ENCODE measurements at regions of chr3 and their contacts with region 1.

Region 1: DNA sequence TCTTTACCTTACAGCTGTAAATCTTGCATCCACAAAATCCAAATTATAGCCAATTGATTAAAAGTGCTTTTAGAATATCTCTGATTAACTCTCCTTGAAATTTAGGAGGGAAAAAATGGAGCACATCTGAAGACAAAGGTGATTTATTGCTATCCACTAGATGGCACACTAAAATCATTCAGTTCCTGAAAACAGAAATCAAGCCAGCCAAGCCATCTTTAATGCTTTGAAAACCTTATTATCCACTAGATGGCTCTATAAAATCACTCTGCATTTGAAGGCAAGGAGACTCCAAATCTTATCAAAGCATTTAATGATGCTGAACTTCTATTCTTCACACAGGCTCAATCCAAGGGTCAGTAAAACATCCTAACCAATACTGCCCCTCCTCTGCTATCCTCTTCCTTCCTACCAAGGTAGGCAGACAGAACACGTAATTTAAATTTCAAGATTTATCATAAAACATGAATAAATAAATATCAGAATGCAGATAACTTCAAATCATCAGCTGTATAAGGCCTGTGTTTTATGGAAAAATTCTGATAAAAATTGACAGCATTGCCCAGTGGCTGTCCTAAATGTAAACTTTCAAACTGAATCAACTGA is 48.4 kb downstream of the GOLIM4 start:
- DNase-seq: peak; percentile 52
- H3K4me3 ChIP-seq: no peak overlapping the region
- H3K27me3 ChIP-seq: no peaks in the 10 kb centered on the region
- CTCF ChIP-seq: peak; percentile 71

Region 2: DNA sequence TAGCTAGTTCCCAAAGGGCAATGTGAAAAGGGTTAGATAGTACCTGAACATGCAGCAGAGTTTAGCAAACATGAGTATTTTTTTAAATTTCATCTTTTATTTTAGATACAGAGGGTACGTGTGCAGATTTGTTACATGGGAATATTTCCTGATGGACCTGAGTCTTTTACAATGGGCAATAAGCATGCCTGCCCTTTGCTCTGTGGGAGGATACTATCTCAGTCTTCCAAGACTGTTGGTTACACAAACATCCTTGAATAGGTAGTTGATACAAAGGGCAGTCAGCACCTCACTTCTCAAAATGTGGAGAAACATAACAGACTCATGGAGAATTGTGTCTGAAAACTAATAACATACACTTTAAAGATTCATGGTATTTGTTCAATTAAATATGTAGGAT is 54.9 kb before region 1 on chr3:
- CTCF ChIA-PET with region 1: no interaction called
- POLR2A ChIA-PET with region 1: no interaction called
- DNase-seq: no peak
- H3K4me3 ChIP-seq: no peak overlapping the region
- H3K27me3 ChIP-seq: no peaks in the 10 kb centered on the region
- CTCF ChIP-seq: no peak

Region 3: DNA sequence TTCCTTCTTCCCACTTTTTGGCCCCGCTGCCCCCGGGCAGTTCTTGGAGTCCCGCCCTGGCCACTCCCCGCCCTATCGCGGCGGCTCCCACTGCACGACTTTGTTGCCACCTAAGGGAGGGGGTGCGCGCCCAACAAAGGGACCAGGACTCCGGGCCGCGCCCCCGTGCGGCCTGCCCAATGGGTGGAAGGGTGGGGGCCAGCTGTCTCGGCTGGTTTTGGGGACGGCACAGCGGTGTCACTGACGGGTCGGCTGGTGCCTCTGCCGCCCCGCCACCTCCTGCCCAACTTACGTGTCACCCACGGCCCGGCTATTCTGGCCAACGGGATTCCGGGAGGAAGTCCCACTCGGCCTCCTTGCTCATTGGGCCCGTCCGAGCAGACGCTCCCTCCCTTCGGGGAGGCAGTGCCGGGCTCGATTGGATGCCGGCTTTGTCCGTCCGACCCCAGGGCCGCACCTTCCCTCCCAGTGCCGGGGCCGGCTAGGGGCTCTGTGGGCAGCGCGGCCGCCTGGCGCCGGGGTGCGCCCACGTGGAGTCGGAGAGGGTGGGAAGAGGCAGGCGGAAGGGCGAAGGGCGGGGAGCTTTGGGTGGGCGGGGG is 48.4 kb after region 1 on chr3 and contains the start of gene GOLIM4:
- CTCF ChIA-PET with region 1: interaction called, 16 read pairs
- POLR2A ChIA-PET with region 1: no interaction called
- DNase-seq: peak; percentile 88
- H3K4me3 ChIP-seq: peak within 1 kb of the TSS; percentile 89
- H3K27me3 ChIP-seq: no peaks in the 10 kb centered on the region
- CTCF ChIP-seq: no peak
- polyA plus RNA-seq, gene GOLIM4: 32.4 and 35.1 TPM in 2 replicates

Region 4: GRCh38 chr3:168100777-168101492 is 53.6 kb after region 1 on chr3:
- CTCF ChIA-PET with region 1: interaction called, 16 read pairs
- POLR2A ChIA-PET with region 1: no interaction called
- DNase-seq: no peak
- H3K4me3 ChIP-seq: no peak overlapping the region
- H3K27me3 ChIP-seq: no peaks in the 10 kb centered on the region
- CTCF ChIP-seq: no peak

Region 5: GRCh38 chr3:168253856-168254255 is 206.6 kb after region 1 on chr3:
- CTCF ChIA-PET with region 1: no interaction called
- POLR2A ChIA-PET with region 1: no interaction called
- DNase-seq: no peak
- H3K4me3 ChIP-seq: no peak overlapping the region
- H3K27me3 ChIP-seq: peaks cover 11% of the 10 kb centered on the region; the same call in 1 of the 2 replicates
- CTCF ChIP-seq: no peak